ENCODE measurements at regions of chr4 and their contacts with region 1.

Region 1: DNA sequence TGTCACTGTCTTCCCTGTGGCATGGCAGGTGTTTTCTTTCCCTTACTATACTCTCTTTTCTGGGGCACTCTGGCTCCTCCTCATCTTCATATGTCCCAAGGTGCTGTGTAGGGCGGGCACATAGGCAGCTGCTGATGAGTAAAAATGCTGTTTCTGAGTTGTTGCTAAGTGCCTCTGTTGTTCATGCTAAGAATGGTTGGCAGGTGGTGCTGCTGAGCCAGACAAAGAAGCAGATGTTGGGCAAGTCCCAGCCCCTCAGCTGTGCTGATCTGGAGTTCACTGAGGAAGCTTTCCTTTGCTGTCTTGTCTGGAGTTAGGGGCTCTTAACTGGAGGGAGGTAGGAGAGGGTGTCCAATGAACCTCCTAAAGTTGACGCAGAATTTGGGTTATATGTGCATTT is 40.6 kb downstream of the HADH start:
- DNase-seq: peak; percentile 28
- H3K4me3 ChIP-seq: no peak overlapping the region
- H3K27ac ChIP-seq: no peak overlapping the region
- H3K4me1 ChIP-seq: no peaks in the 10 kb centered on the region
- H3K27me3 ChIP-seq: no peaks in the 10 kb centered on the region
- CTCF ChIP-seq: peak in 4 of 5 experiments; percentile 7 to 32 (median 26)
- EP300 ChIP-seq: no peak
- POLR2A ChIP-seq: no peak

Region 2: GRCh38 chr4:107423677-107424405 is 606.5 kb before region 1 on chr4:
- in situ Hi-C with region 1: no loop called
- intact Hi-C with region 1: no loop called
- DNase-seq: no peak
- H3K4me3 ChIP-seq: no peak overlapping the region
- H3K27ac ChIP-seq: no peak overlapping the region
- H3K4me1 ChIP-seq: no peaks in the 10 kb centered on the region
- H3K27me3 ChIP-seq: no peaks in the 10 kb centered on the region
- CTCF ChIP-seq: no peak
- EP300 ChIP-seq: no peak
- POLR2A ChIP-seq: no peak

Region 3: DNA sequence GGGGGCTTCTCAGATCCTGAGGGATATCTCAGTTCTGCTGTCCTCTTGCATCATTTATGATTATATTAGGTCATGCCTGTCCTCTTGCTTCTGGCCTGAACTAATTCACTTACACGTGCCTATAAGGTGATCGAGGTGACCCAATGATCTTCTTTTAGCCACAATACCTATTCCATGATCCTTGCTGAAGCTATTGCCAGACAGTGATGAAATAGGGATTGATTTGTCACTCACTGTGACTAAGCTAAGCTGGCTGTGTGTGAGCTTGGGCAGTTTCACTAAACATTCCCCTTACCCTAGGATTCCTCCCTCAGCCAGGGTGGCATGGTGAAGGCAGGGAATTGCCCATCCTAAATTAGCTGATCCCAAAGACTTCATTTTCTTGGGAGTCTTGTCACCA is 21.6 kb before region 1 on chr4:
- in situ Hi-C with region 1: no loop called
- intact Hi-C with region 1: no loop called
- DNase-seq: no peak
- H3K4me3 ChIP-seq: no peak overlapping the region
- H3K27ac ChIP-seq: no peak overlapping the region
- H3K4me1 ChIP-seq: peaks cover 0 to 5% (median 0%) of the 10 kb centered on the region in 4 donors
- H3K27me3 ChIP-seq: no peaks in the 10 kb centered on the region
- CTCF ChIP-seq: no peak
- EP300 ChIP-seq: no peak
- POLR2A ChIP-seq: no peak

Region 4: DNA sequence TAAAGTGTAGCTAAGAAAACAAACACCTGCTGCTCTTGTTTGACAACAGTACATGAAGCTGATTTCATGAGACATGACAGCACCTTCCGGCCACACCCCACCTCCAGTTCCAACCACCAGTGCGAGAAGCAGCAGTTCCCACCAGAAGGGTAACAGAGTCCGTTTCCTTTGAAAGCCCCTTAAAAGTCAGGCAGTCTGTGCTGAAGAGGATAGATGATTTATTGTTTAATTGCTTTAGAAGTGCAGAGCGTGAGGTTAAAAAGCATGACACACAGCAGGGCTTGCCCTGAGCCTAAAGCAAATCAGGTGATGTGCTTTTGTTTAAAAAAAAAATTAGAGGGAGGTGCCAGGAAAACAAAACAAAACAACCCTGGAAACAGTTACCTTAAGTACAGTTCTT is 42.0 kb after region 1 on chr4:
- in situ Hi-C with region 1: no loop called
- intact Hi-C with region 1: no loop called
- DNase-seq: peak; percentile 46
- H3K4me3 ChIP-seq: no peak overlapping the region
- H3K27ac ChIP-seq: peak overlapping the region in 1 of 4 donors; percentile 7
- H3K4me1 ChIP-seq: peaks cover 0 to 6% (median 0%) of the 10 kb centered on the region in 4 donors
- H3K27me3 ChIP-seq: no peaks in the 10 kb centered on the region
- CTCF ChIP-seq: no peak
- EP300 ChIP-seq: no peak
- POLR2A ChIP-seq: no peak

Region 5: GRCh38 chr4:108560616-108561015 is 530.3 kb after region 1 on chr4:
- in situ Hi-C with region 1: loop called in 1 of 4 experiments (anchors 25 kb)
- intact Hi-C with region 1: no loop called
- DNase-seq: no peak
- H3K4me3 ChIP-seq: no peak overlapping the region
- H3K27ac ChIP-seq: no peak overlapping the region
- H3K4me1 ChIP-seq: no peaks in the 10 kb centered on the region
- H3K27me3 ChIP-seq: no peaks in the 10 kb centered on the region
- CTCF ChIP-seq: no peak
- EP300 ChIP-seq: no peak
- POLR2A ChIP-seq: no peak